B cell (primary cell): ENCODE measurements at regions of chr10 and their contacts with region 1.

Region 1: DNA sequence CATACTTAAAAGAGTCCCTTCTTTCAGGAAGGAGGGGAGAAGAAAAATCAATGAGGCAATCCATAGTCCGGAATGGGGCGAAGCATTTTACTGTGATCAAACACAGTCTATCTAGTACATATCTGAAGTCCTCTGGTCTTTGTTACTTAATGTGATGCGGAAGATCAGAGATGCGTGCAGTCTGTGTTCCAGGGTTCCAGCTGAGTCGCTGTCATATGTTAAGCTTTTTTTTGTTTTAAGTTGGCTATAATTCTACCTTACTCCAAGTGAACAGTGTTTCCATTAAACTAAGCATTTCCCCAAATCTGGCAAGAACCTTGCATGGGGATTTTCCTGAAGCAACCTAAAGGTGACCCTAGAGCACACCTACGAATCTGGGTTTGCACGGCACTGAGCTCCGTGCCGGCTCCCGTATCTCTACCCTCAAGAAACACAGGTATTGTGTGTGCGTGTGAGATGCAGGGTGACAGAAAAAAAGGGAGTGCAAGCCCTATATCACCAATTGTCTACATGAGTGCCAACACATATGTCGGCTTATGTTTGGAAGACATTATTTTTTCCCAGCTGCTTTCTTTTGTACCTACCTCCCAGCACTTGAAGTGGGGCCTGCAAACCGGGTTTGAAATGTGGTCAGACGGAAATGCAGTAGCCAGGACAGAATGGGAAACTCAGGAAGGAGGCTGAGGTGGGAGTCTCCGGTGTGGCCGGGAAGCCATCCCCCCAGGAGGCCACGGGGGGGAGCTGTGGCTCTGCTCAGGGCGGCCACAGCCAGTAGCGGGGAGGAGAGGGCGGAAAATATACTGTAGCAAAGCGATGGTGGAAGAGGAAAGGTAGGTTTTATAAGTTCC is 435.8 kb upstream of the MGMT start:
- DNase-seq: peak; percentile 21
- ATAC-seq: peak; percentile 67
- H3K4me3 ChIP-seq: no peak overlapping the region
- H3K4me3 Mint-ChIP-seq: no peak overlapping the region
- H3K27ac ChIP-seq: no peak overlapping the region
- H3K27ac Mint-ChIP-seq: no peak overlapping the region
- H3K4me1 ChIP-seq: peaks cover 7 to 9% of the 10 kb centered on the region in 2 donors
- H3K4me1 Mint-ChIP-seq: peaks cover 8% of the 10 kb centered on the region
- H3K27me3 ChIP-seq: peaks cover 0 to 17% (median 1%) of the 10 kb centered on the region in 4 experiments
- H3K27me3 Mint-ChIP-seq: peaks cover 31% of the 10 kb centered on the region
- CTCF ChIP-seq: peak; percentile 50

Region 2: GRCh38 chr10:128721963-128722445 is 309.2 kb before region 1 on chr10:
- CTCF ChIA-PET with region 1: no interaction called
- POLR2A ChIA-PET with region 1: no interaction called
- intact Hi-C with region 1: no loop called
- DNase-seq: no peak
- ATAC-seq: no peak
- H3K4me3 ChIP-seq: no peak overlapping the region
- H3K4me3 Mint-ChIP-seq: no peak overlapping the region
- H3K27ac ChIP-seq: no peak overlapping the region
- H3K27ac Mint-ChIP-seq: no peak overlapping the region
- H3K4me1 ChIP-seq: no peaks in the 10 kb centered on the region
- H3K4me1 Mint-ChIP-seq: no peaks in the 10 kb centered on the region
- H3K27me3 ChIP-seq: no peaks in the 10 kb centered on the region
- H3K27me3 Mint-ChIP-seq: no peaks in the 10 kb centered on the region
- CTCF ChIP-seq: no peak

Region 3: DNA sequence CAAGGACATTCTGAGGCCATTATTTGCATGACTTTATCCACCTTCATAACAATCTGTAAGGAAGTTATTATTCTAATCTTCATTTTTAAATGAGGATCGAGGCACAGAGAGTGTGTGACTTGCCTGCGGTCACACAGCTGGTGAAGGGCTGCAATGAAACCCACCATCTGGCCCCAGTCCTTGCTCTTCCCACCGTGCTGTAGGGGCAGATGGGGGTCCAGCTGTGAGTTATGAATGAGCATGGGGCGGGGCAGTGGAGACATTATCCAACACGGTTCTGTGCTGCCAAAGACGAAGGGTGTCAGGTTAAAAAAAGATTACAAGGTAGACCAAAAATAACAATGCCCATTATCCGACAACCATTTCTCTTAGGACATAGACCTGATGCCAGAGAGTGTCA is 18.3 kb after region 1 on chr10:
- CTCF ChIA-PET with region 1: no interaction called
- POLR2A ChIA-PET with region 1: no interaction called
- intact Hi-C with region 1: no loop called
- DNase-seq: no peak
- ATAC-seq: no peak
- H3K4me3 ChIP-seq: no peak overlapping the region
- H3K4me3 Mint-ChIP-seq: no peak overlapping the region
- H3K27ac ChIP-seq: no peak overlapping the region
- H3K27ac Mint-ChIP-seq: no peak overlapping the region
- H3K4me1 ChIP-seq: no peaks in the 10 kb centered on the region
- H3K4me1 Mint-ChIP-seq: no peaks in the 10 kb centered on the region
- H3K27me3 ChIP-seq: no peaks in the 10 kb centered on the region
- H3K27me3 Mint-ChIP-seq: no peaks in the 10 kb centered on the region
- CTCF ChIP-seq: no peak

Region 4: DNA sequence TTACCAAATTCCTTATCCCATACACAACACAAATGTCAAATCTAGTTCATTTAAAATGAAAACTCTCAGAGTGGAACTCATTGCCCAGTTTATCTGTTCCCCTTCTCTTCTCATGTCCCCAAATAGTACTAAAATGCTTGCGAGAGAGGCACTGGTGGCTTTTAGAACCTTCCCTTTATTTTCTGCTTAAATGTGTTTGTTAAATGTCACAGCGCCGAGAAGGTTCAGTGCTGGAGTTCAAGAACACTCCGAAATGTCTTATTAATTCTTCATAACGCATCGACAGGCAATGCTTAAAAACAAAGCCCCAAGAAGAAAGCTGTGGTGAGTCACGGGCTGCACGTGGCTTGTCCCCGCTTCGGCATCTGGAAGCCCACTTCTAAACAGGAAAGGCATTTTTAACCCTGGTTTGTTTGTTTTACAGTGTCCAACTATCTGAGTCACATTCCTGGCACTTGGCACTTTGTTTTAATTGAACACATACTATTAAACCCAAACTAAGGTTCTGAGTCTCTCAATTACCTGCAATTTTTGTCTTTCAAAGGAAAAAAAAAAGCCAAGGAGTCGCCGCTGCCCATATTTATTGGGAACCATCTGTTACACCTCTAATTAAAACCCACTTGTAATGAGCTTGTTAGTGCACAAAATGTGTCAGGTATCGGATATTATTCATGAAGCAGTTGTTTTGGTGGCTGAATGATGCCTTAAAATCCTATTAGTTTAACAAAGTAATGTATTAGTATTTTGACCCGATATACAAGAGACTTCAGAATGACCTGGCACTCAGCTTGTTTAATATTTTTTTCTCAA is 385.9 kb after region 1 on chr10:
- CTCF ChIA-PET with region 1: no interaction called
- POLR2A ChIA-PET with region 1: no interaction called
- intact Hi-C with region 1: no loop called
- DNase-seq: no peak
- ATAC-seq: no peak
- H3K4me3 ChIP-seq: no peak overlapping the region
- H3K4me3 Mint-ChIP-seq: no peak overlapping the region
- H3K27ac ChIP-seq: no peak overlapping the region
- H3K27ac Mint-ChIP-seq: no peak overlapping the region
- H3K4me1 ChIP-seq: no peaks in the 10 kb centered on the region
- H3K4me1 Mint-ChIP-seq: no peaks in the 10 kb centered on the region
- H3K27me3 ChIP-seq: no peaks in the 10 kb centered on the region
- H3K27me3 Mint-ChIP-seq: peaks cover 7% of the 10 kb centered on the region
- CTCF ChIP-seq: no peak

Region 5: GRCh38 chr10:129593953-129594352 is 562.7 kb after region 1 on chr10:
- CTCF ChIA-PET with region 1: no interaction called
- POLR2A ChIA-PET with region 1: no interaction called
- intact Hi-C with region 1: no loop called
- DNase-seq: no peak
- ATAC-seq: no peak
- H3K4me3 ChIP-seq: no peak overlapping the region
- H3K4me3 Mint-ChIP-seq: no peak overlapping the region
- H3K27ac ChIP-seq: no peak overlapping the region
- H3K27ac Mint-ChIP-seq: no peak overlapping the region
- H3K4me1 ChIP-seq: no peaks in the 10 kb centered on the region
- H3K4me1 Mint-ChIP-seq: no peaks in the 10 kb centered on the region
- H3K27me3 ChIP-seq: no peaks in the 10 kb centered on the region
- H3K27me3 Mint-ChIP-seq: no peaks in the 10 kb centered on the region
- CTCF ChIP-seq: no peak

Region 6: DNA sequence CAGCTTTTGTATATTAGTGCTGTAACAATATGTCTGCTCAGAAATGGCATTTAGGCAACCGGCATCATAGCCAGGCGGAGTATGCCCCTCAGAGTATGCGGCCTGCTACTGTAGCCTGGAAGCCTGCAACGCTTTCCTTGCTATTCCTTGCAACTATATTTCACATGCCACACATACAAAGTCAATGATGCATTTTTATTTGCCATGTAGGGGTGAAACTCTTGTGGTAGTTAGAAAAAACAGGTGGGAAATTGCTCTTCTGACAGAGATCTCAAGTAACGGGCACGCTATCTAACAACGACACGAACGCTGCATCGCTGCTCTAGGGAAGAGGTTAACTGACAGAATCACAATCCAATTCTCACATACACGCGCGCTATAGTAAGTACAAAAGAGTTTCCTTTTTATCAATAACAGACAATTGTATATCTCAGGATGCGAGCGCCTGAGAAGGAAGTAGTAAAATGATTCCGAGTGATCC is 927.0 kb after region 1 on chr10:
- CTCF ChIA-PET with region 1: no interaction called
- POLR2A ChIA-PET with region 1: no interaction called
- intact Hi-C with region 1: loop called (anchors 5 kb)
- DNase-seq: no peak
- ATAC-seq: no peak
- H3K4me3 ChIP-seq: peak overlapping the region in 2 of 5 experiments; percentile 19 to 42
- H3K4me3 Mint-ChIP-seq: peak overlapping the region; percentile 80
- H3K27ac ChIP-seq: no peak overlapping the region
- H3K27ac Mint-ChIP-seq: no peak overlapping the region
- H3K4me1 ChIP-seq: peaks cover 21 to 42% of the 10 kb centered on the region in 2 donors
- H3K4me1 Mint-ChIP-seq: peaks cover 17% of the 10 kb centered on the region
- H3K27me3 ChIP-seq: peaks cover 5 to 73% (median 57%) of the 10 kb centered on the region in 4 experiments
- H3K27me3 Mint-ChIP-seq: peaks cover 67% of the 10 kb centered on the region
- CTCF ChIP-seq: no peak